Activated B cell treated with CpG ODN at 0.5 μM for 24 hours (primary cell): ENCODE measurements at regions of chr17 and their contacts with region 1.

Region 1: GRCh38 chr17:81871387-81872230 is 472 bp upstream of the ARHGDIA start:
- DNase-seq: peak; percentile 96
- ATAC-seq: peak; percentile 18
- H3K4me3 Mint-ChIP-seq: peak overlapping the region; percentile 87
- H3K27ac Mint-ChIP-seq: peak overlapping the region; percentile 93
- H3K4me1 Mint-ChIP-seq: peaks cover 39% of the 10 kb centered on the region
- H3K27me3 Mint-ChIP-seq: no peaks in the 10 kb centered on the region
- CTCF ChIP-seq: no peak

Region 2: GRCh38 chr17:81702971-81703746 is 168.4 kb before region 1 on chr17 and contains the start of gene MRPL12:
- CTCF ChIA-PET with region 1: no interaction called
- POLR2A ChIA-PET with region 1: interaction called, 10 read pairs
- intact Hi-C with region 1: no loop called
- DNase-seq: peak; percentile 84
- ATAC-seq: peak; percentile 94
- H3K4me3 Mint-ChIP-seq: peak within 1 kb of the TSS; percentile 89
- H3K27ac Mint-ChIP-seq: peak within 1 kb of the TSS; percentile 86
- H3K4me1 Mint-ChIP-seq: peaks cover 38% of the 10 kb centered on the region
- H3K27me3 Mint-ChIP-seq: no peaks in the 10 kb centered on the region
- CTCF ChIP-seq: no peak
- total RNA-seq, gene MRPL12: 68.8 and 69.8 TPM in 2 replicates

Region 3: DNA sequence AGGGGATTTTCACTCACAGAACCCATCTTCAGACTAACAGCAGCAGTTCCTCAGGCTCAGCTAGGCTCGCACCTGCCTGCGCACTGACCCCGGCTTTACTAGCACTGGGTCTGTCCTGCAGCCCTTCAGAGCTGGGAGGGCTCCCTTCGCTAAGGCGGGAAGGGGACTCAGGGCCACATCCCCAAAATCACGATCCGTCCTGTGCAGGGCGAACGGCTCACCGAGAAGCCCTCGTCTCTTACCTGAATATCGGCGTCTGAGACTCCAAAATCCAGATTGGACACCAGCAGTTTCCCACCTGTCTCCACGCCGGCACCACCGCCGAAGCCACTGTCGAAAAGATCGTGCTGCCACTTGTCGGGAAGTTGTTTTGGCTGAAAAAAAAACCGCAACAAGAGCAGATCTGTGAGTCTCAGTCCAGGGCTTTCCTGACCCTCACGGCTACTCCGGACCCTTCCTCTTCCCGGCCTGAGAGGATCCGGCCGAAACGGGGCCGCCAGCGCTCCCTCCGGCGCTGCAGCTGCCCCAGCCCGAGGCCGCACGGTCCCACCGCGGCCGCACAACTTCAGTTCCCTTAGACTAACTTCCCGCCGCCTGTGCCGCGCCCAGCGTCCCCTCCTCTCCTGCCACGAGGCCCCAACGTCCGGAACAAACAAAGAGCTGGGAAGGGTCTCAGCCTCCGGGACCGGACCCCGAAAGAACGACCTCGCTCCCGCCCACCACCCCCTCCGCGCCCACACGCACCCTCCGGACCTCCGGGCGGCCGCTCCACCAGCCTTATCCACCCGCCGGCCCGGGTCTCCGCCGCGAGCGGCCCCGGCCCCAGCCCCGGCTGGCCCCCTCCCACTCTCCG is 19.1 kb after region 1 on chr17:
- CTCF ChIA-PET with region 1: interaction called, 4 read pairs
- POLR2A ChIA-PET with region 1: interaction called, 16 read pairs
- intact Hi-C with region 1: loop called (anchors 1 kb)
- DNase-seq: no peak
- ATAC-seq: no peak
- H3K4me3 Mint-ChIP-seq: peak overlapping the region; percentile 88
- H3K27ac Mint-ChIP-seq: peak overlapping the region; percentile 84
- H3K4me1 Mint-ChIP-seq: peaks cover 30% of the 10 kb centered on the region
- H3K27me3 Mint-ChIP-seq: no peaks in the 10 kb centered on the region
- CTCF ChIP-seq: no peak

Region 4: DNA sequence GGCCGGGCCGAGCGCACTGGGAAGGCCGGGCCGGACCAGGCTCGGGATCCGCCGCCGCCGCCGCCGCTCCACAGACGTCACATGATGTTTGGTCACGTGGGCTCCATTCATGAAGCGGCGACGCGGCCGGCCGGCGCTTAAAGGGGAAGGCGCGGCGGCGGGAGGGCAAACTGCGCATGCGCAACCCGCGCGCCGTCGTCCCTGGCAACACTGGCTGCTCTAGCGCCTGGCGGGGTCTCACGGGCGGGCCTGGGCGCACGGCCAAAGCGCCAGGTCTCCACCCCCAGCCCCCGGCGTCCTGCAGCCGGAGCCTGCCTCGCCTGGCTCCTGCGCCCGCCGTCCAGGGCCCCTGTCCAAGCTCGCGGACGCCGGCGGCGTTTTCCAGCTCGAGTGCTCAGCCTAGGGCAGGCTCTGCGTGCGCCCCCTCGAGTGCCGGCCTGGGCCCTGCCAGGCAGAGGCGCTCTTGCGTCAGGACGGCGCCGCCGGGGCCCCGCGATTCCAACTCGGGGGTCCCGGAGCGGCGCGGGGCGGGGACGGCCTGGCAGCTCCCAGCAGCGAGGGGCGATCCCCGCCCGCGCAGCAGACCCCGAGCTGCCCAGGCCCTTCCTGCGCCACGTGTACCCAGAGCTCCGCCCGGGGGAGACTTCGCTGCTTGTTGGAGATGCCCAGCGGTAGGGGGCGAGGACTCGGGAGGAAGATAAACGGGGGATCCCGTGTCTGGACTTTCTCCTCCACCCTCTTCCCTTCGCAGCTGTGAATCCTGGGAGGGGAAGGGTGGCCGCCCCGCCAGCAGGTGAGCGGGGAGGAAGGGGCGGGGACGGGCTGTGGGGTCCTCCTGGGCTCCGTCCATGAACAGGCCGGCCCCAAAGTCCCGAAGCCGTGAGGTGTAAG is 56.3 kb after region 1 on chr17 and contains the start of gene MAFG:
- CTCF ChIA-PET with region 1: interaction called, 4 read pairs
- POLR2A ChIA-PET with region 1: interaction called, 13 read pairs
- intact Hi-C with region 1: loop called (anchors 1 kb)
- DNase-seq: peak; percentile 93
- ATAC-seq: peak; percentile 60
- H3K4me3 Mint-ChIP-seq: peak within 1 kb of the TSS; percentile 88
- H3K27ac Mint-ChIP-seq: peak within 1 kb of the TSS; percentile 85
- H3K4me1 Mint-ChIP-seq: peaks cover 33% of the 10 kb centered on the region
- H3K27me3 Mint-ChIP-seq: peaks cover 7% of the 10 kb centered on the region
- CTCF ChIP-seq: no peak
- total RNA-seq, gene MAFG: 27.9 and 30.7 TPM in 2 replicates

Region 5: DNA sequence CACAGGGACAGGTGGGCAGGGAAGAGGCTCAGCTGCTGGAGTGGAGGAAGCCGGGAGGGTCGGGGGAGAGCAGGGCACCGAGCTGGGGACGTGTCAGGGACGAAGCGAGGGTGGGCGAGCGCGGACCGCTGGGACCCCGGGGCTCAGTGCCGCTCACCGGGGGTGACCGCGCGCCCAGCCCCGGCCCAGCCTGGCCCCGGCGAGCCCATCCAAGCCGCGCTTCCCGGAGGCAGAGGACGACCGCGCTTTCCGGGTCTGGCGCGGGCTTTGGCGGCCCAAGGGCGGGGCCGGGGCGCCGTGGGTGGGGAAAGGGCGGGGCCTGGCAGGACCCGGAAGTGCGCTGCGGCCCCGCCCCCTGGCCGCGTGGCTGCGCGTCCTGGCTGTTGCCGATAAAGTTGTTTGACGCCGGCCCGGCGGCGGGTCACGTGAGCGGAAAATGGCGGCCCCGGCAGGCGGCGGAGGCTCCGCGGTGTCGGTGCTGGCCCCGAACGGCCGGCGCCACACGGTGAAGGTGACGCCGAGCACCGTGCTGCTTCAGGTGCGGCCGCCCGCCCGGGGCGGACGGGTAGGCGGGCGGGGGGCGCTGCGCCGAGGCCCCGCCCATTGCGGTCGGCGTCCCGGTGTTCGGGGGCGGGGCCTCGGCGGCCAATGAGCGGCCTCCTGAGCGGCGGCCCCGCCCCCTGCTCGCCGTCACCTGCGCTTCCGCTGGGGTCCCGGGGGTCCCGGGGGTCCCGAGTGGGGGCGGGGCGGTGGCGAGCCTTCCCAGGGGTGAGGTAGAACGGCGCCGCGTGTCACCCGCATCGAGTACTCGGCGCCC is 105.8 kb after region 1 on chr17 and contains the start of gene ASPSCR1:
- CTCF ChIA-PET with region 1: no interaction called
- POLR2A ChIA-PET with region 1: interaction called, 10 read pairs
- intact Hi-C with region 1: no loop called
- DNase-seq: peak; percentile 94
- ATAC-seq: peak; percentile 92
- H3K4me3 Mint-ChIP-seq: peak within 1 kb of the TSS; percentile 95
- H3K27ac Mint-ChIP-seq: peak within 1 kb of the TSS; percentile 93
- H3K4me1 Mint-ChIP-seq: peaks cover 27% of the 10 kb centered on the region
- H3K27me3 Mint-ChIP-seq: no peaks in the 10 kb centered on the region
- CTCF ChIP-seq: no peak
- total RNA-seq, gene ASPSCR1: 40.0 and 50.0 TPM in 2 replicates

Region 6: GRCh38 chr17:82410014-82410716 is 538.6 kb after region 1 on chr17:
- CTCF ChIA-PET with region 1: no interaction called
- POLR2A ChIA-PET with region 1: interaction called, 17 read pairs
- intact Hi-C with region 1: no loop called
- DNase-seq: no peak
- ATAC-seq: no peak
- H3K4me3 Mint-ChIP-seq: no peak overlapping the region
- H3K27ac Mint-ChIP-seq: no peak overlapping the region
- H3K4me1 Mint-ChIP-seq: peaks cover 25% of the 10 kb centered on the region
- H3K27me3 Mint-ChIP-seq: no peaks in the 10 kb centered on the region
- CTCF ChIP-seq: no peak